Right ventricle myocardium inferior (tissue), 1 donor: ENCODE measurements at regions of chr4 and their contacts with region 1.

Region 1: DNA sequence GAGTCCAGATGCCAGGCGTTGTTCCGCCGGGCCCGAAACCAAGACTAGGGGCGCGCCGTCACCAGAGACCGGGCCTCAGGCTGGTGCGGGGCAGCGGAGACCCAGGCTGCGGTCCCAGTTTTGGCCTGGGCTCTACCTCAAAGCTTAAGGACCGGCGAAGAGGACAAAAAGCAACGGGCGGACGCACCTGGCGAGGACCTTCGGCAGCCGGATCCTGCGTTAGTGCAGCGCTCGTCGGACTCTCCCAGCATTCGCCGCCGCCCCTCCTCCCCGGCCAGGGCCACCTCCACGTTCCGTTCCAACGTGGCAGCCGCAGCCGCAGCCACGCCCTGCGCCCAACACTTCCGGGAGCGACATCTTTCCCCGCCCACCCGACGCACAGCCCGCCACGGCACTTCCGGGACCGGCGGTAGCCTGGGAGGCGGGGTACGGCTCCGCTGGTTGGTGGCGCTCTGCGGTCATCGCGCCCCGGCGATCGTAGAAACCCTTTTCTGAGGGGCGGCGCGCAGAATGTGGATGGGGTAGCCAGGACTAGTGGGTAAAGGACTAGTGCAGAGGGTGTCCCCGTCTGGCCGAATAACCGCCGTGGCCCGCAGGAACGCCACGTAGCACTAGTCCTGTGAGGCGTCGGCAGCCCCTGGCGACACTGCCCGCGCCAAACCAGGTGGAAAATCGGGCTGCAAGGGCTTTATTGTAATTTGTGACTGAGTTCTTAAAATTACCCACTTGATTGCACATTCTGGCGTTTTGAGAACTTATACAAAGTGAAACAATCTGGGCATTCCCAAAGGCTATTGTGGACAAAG is at the start of gene SEC31A:
- DNase-seq: peak; percentile 99
- ATAC-seq: peak; percentile 99
- total RNA-seq, gene SEC31A: 85.6 TPM

Region 2: GRCh38 chr4:83284193-83285054 is 393.3 kb after region 1 on chr4 and contains the start of gene COQ2:
- intact Hi-C with region 1: loop called (anchors 10 kb)
- DNase-seq: peak; percentile 98
- ATAC-seq: peak; percentile 97
- total RNA-seq, gene COQ2: 27.3 TPM